WTC11 (cell line): ENCODE measurements at regions of chr14 and their contacts with region 1.

Region 1: DNA sequence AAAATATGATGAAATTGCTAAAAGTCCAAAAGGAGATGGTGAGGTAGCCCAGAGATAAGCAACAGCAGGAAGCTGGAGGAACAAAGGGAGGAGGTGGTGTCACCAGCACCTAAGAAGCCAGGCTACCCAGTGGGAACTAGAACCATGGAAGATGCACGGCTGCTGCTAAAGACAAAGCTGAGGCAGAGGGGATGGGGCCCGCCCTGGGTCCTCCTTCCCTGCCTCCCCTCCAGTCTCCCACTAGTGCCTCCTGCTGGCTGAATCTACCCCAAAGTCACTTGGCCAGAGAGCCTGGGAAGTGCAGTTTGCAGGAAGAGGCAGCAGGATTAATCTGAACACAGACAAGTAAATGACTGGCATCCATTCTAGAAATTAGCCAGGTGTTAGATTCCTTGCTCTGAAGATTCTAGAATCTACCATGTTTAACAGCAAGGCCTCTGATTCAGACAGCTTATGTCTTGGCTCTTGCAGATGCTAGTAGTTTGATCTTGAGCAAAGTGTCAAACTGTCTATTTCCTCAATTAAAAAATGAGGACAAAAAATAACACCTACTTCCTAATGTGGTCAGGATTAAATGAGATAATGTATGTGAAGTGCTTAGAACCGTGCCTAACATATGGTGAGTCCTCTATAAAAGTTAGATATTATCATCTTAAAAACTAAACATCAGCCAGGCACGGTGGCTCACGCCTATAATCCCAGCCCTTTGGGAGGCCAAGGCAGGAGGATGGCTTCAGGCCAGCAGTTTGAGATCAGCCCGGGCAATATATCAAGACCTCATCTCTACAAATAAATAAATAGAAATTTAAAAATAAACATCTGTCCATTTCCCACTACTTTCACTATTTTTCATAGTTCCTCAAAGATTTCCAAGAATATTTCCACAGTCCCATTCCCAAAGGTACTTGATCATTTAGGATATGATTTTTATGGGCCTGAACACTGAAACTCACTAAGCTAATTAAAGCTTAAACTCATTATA is 5.8 kb upstream of the LRP10 start:
- DNase-seq: peak; percentile 84
- ATAC-seq: peak; percentile 96
- H3K4me3 Mint-ChIP-seq: no peak overlapping the region
- H3K27ac Mint-ChIP-seq: peak overlapping the region; percentile 31; the same call in 1 of the 2 replicates
- H3K4me1 Mint-ChIP-seq: peaks cover 13% of the 10 kb centered on the region
- H3K27me3 Mint-ChIP-seq: no peaks in the 10 kb centered on the region
- CTCF ChIP-seq: peak; percentile 47

Region 2: GRCh38 chr14:22726012-22726411 is 139.7 kb before region 1 on chr14:
- CTCF ChIA-PET with region 1: no interaction called
- POLR2A ChIA-PET with region 1: interaction called, 12 read pairs
- DNase-seq: no peak
- ATAC-seq: no peak
- H3K4me3 Mint-ChIP-seq: no peak overlapping the region
- H3K27ac Mint-ChIP-seq: no peak overlapping the region
- H3K4me1 Mint-ChIP-seq: peaks cover 6% of the 10 kb centered on the region; the same call in 1 of the 2 replicates
- H3K27me3 Mint-ChIP-seq: no peaks in the 10 kb centered on the region; the same call in 1 of the 2 replicates
- CTCF ChIP-seq: no peak

Region 3: DNA sequence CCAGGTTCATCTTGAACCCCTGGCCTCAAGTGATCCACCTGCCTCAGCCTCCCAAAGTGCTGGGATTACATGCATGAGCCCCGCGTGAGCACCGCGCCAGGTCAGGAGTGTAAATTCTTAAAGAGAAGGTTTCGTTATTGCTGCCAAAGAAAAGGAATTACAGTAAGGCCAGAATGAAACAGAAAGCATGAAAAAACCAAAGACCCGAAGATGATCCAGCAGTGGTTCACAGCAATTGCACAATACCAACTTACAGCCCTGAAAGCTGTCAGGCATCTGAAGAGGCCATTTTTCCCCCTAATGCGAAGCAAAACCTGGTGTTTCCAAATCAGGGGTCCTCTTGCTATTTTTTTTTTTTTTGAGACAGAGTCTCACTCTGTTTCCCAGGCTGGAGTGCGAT is 42.9 kb after region 1 on chr14:
- CTCF ChIA-PET with region 1: no interaction called
- POLR2A ChIA-PET with region 1: interaction called, 11 read pairs
- DNase-seq: no peak
- ATAC-seq: no peak
- H3K4me3 Mint-ChIP-seq: no peak overlapping the region
- H3K27ac Mint-ChIP-seq: peak overlapping the region; percentile 65; the same call in 1 of the 2 replicates
- H3K4me1 Mint-ChIP-seq: no peaks in the 10 kb centered on the region
- H3K27me3 Mint-ChIP-seq: no peaks in the 10 kb centered on the region
- CTCF ChIP-seq: no peak